ENCODE measurements at regions of chrX and their contacts with region 1.

Region 1: GRCh38 chrX:1453951-1454785 is 1.5 kb upstream of the ASMTL start:
- DNase-seq: peak; percentile 89 to 93
- H3K4me3 ChIP-seq: peak overlapping the region; percentile 90 to 96
- H3K27ac ChIP-seq: peak overlapping the region; percentile 85
- H3K4me1 ChIP-seq: peaks cover 25% of the 10 kb centered on the region
- H3K27me3 ChIP-seq: no peaks in the 10 kb centered on the region
- CTCF ChIP-seq: peak; percentile 73 to 94 (median 93)
- POLR2A ChIP-seq: peak in 1 of 2 donors; percentile 10

Region 2: GRCh38 chrX:1391707-1392375 is 62.3 kb before region 1 on chrX and contains the start of gene SLC25A6:
- intact Hi-C with region 1: loop called (anchors 2 kb)
- DNase-seq: peak in 1 of 2 donors; percentile 99
- H3K4me3 ChIP-seq: peak within 1 kb of the TSS; percentile 100
- H3K27ac ChIP-seq: peak within 1 kb of the TSS; percentile 98
- H3K4me1 ChIP-seq: peaks cover 43% of the 10 kb centered on the region
- H3K27me3 ChIP-seq: no peaks in the 10 kb centered on the region
- CTCF ChIP-seq: peak in 1 of 3 experiments; percentile 17
- POLR2A ChIP-seq: peak in 1 of 2 donors; percentile 63
- total RNA-seq, gene SLC25A6: 442 TPM

Region 3: GRCh38 chrX:1537035-1537715 is 83.0 kb after region 1 on chrX and contains the start of gene P2RY8:
- intact Hi-C with region 1: no loop called
- DNase-seq: peak in 1 of 2 donors; percentile 77
- H3K4me3 ChIP-seq: peak within 1 kb of the TSS; percentile 31 to 33
- H3K27ac ChIP-seq: no peak within 1 kb of the TSS
- H3K4me1 ChIP-seq: no peaks in the 10 kb centered on the region
- H3K27me3 ChIP-seq: no peaks in the 10 kb centered on the region
- CTCF ChIP-seq: no peak
- POLR2A ChIP-seq: no peak
- total RNA-seq, gene P2RY8: 0.74 TPM

Region 4: DNA sequence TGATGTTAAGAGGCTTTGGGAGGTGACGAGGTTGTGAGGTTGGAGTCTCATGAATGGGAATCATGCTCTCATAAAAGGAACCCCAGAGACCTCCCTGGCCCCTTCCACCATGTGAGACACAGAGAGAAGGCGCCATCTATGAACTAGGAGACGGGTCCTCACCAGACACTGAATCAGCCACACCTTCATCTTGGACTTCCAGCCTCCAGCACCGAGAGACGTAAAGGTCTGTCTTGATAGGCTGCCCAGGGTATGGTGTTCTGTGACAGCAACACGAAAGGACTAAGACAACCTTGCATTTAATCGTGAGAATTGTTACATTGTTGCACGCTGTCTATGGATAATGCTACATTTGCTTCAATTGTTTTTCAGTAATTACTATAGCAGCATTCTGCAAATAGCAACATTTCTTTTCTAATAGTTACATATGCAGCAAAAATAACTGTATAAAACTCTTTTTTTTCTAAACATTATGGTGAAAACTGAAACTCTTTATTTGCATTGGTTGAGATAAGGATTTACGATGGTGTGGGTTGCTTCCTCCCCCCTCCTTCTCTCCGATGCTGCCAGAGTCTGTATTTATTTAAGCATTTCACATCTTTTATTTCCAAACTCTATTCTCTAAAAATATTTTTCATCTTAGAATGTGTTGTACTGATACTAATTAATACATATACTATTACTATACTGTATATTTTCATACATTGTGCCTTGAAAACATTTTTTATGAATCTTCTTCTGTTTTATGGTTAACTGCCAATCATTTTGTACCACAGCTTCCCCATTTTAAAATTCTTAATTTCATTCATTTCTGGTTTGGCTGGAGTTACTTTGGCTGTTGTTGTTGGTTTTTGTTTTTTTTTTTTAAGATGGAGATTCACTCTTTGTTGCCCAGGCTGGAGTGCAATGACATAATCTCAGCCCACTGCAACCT is 110.8 kb after region 1 on chrX:
- intact Hi-C with region 1: no loop called
- DNase-seq: peak in 1 of 2 donors; percentile 37
- H3K4me3 ChIP-seq: no peak overlapping the region
- H3K27ac ChIP-seq: no peak overlapping the region
- H3K4me1 ChIP-seq: no peaks in the 10 kb centered on the region
- H3K27me3 ChIP-seq: no peaks in the 10 kb centered on the region
- CTCF ChIP-seq: no peak
- POLR2A ChIP-seq: no peak

Region 5: DNA sequence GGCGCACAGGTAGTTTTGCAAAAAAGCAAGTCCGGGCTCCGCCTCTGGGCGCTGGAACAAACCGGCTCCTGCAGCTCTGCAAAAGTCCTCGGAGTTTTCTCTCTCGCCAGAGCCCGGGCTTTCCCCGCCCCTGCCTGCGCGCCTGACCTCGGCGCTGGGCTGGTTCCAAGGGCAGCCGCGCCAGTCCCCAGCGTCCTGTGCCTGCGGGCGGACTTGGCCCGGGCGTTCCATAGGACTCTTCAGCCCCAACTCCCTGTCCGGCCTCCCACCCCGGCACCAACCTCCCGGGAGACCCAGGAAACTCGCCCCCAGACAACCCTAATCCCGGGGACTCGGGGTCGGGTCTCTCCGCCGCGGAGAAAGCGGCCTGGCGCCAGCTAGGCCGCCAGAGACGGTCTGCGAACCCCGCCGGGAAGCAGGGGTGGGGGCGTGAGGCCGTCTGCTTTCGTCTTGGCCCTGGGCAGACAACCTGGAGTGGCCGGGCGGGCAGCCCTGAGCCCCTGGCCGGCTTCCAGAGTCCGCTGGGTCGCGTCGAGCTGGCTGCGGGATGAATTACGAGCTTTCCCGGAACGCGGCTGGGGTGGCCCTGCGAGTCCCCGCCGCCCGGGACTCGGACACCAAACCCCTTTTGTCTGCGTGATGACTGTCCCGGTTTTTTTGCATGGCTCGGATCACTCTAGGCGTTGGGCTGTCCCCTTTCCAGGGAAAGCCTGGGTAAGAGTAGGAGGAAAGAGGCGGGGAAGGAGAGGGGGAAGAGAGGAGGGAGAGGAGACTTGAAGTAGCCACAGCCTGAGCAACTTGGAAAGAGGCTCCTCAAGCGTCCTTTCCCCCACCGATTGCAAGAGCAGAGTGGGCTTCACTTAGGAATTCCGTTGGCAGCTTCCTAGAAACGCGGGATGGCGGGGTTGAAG is 1891.4 kb after region 1 on chrX:
- intact Hi-C with region 1: no loop called
- DNase-seq: no peak
- H3K4me3 ChIP-seq: peak overlapping the region; percentile 50 to 51
- H3K27ac ChIP-seq: peak overlapping the region; percentile 68
- H3K4me1 ChIP-seq: peaks cover 14% of the 10 kb centered on the region
- H3K27me3 ChIP-seq: no peaks in the 10 kb centered on the region
- CTCF ChIP-seq: no peak
- POLR2A ChIP-seq: no peak

Measured in vagina (tissue), 2 donors.